ENCODE measurements at regions of chr3 and their contacts with region 1.

Region 1: DNA sequence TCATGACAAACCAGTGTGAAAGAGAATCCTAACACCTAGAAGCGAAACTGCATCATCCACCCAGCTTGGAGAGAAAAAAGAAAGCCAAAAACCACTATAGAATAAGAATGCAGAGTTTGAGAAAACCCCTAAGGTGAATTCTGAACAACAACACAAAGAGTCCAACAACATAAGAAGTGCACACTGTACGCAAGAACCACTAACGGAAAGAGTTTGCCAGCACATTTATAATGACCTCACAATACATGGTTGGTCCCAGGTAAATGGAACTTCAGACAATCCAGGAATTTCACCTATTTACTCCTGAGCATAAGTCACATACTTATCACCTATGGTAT is 128.3 kb upstream of the BHLHE40 start:
- DNase-seq: peak; percentile 56
- ATAC-seq: peak; percentile 72
- H3K4me3 Mint-ChIP-seq: peak overlapping the region; percentile 39
- H3K27ac Mint-ChIP-seq: peak overlapping the region; percentile 98
- H3K4me1 Mint-ChIP-seq: peaks cover 84% of the 10 kb centered on the region
- H3K27me3 Mint-ChIP-seq: no peaks in the 10 kb centered on the region

Region 2: GRCh38 chr3:4722103-4722502 is 128.8 kb before region 1 on chr3:
- CTCF ChIA-PET with region 1: interaction called, 3 read pairs
- POLR2A ChIA-PET with region 1: no interaction called
- intact Hi-C with region 1: loop called in 1 of 2 experiments (anchors 5 kb)
- DNase-seq: peak; percentile 58
- ATAC-seq: peak; percentile 93
- H3K4me3 Mint-ChIP-seq: no peak overlapping the region
- H3K27ac Mint-ChIP-seq: peak overlapping the region; percentile 51
- H3K4me1 Mint-ChIP-seq: peaks cover 32% of the 10 kb centered on the region
- H3K27me3 Mint-ChIP-seq: no peaks in the 10 kb centered on the region

Region 3: DNA sequence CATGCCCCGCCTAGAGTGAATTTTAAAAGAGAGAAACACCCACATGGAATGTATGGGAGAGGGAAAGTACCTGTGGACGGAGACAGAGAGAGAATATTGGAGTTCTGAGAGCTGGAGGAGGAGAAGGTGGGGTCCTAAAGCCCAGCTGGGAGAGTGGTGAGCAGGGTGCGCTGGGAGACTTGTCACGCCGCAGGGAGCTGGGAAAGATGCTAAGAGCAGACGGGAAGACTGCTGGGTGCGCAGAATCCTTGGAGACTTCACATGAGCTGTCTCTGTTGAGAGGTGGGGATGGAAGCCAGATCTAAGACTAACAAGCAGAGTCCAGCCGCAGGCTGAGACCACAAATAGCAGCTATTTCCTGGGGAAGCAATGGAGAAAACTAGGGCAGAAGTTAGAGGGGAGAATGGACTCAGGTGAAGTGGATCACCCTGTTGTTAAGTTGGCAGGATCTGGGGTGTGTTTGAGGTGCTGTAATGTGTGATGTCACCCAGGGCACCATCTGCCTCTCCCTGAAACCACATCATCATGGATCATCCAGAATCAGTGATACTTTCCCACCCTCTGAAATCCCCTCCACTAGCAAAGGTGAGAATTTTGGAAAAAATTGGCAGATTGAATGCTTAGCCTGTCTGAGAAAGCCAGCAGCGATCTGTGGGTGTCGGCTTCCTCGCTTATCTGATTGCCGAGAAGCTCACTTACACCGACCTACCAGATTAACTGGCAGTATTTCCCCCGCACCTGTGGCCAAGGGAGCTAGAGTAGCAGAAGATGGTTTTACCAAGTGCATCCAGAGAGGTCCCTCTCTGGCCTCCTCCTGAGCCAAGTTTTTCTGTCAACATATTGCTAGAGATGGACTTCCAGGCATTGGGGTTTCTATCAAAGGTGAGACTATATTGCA is 46.5 kb before region 1 on chr3:
- CTCF ChIA-PET with region 1: interaction called, 4 read pairs
- POLR2A ChIA-PET with region 1: interaction called, 14 read pairs
- intact Hi-C with region 1: loop called (anchors 1 to 2 kb)
- DNase-seq: peak; percentile 48
- ATAC-seq: no peak
- H3K4me3 Mint-ChIP-seq: peak overlapping the region; percentile 4
- H3K27ac Mint-ChIP-seq: peak overlapping the region; percentile 73
- H3K4me1 Mint-ChIP-seq: peaks cover 39% of the 10 kb centered on the region
- H3K27me3 Mint-ChIP-seq: no peaks in the 10 kb centered on the region

Region 4: DNA sequence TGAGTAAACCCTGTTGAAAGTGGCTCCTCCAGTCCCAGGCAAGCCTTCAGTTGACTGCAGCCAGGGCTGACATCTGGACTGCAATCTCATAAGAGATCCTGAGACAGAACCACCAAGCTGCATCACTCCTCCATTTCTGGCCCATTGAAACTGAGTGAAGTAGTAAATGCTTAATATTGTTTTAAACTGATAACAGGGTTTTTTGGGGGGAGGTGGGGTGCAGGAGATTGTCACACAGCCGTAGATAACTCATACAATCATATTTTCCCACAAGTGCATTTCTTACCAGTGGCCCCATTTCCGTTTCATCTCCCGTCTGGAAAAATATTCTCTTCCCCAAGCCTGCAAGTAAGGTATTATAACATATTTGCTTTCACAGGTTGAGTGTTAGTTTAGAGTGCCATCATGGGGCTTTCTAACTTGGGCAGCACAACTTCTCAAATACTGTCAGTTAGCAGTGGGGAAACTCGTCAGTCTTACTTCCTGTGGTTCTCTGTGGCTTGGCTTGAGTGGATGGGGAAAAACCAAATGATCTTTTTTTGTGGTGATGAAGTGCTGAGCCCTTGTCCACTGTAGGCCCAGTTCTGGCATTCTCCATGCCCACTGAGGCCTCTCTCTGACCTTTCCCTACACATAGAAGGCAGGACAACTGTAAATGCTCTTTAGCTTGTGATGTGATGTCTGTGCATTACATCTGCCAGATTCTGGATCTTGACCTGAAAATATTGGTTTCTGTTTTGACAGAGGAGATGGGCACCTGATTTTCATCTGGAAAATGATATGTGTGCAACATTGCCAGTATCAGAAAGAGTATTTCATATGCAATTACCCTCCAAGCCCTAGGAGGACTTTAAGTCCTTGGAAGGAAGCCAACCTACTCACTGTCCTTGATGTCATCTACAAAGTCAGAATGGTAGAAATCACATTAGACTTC is 38.3 kb after region 1 on chr3:
- CTCF ChIA-PET with region 1: no interaction called
- POLR2A ChIA-PET with region 1: no interaction called
- intact Hi-C with region 1: loop called (anchors 1 kb)
- DNase-seq: peak; percentile 50
- ATAC-seq: peak; percentile 90
- H3K4me3 Mint-ChIP-seq: peak overlapping the region; percentile 5
- H3K27ac Mint-ChIP-seq: peak overlapping the region; percentile 83
- H3K4me1 Mint-ChIP-seq: peaks cover 37% of the 10 kb centered on the region
- H3K27me3 Mint-ChIP-seq: peaks cover 2% of the 10 kb centered on the region

Region 5: DNA sequence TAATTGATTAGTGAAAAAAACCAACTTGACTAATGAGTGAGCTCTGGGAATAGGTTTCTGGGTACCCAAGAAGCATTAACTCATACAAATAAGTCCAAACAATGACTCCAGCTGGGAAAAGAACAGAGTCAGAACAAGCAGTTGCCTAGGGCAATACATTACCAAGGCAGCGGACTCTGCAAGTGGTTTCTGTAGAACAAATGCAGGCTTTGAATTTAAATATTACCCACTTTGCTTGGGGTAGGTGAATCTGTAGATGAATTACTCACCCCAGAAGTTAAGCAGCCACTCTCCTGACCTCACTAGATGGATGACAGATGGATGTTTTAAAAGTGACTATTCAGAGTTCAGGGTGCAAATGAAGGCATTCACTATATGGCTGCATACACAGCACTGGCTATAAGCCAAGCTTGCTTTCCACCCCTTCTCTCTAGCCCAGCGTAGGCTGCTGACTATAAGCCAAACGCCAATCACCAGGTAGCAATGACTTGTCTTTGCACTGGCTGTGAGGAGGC is 55.3 kb after region 1 on chr3:
- CTCF ChIA-PET with region 1: no interaction called
- POLR2A ChIA-PET with region 1: interaction called, 6 read pairs
- intact Hi-C with region 1: loop called (anchors 1 kb)
- DNase-seq: peak; percentile 54
- ATAC-seq: peak; percentile 75
- H3K4me3 Mint-ChIP-seq: no peak overlapping the region
- H3K27ac Mint-ChIP-seq: peak overlapping the region; percentile 53
- H3K4me1 Mint-ChIP-seq: peaks cover 75% of the 10 kb centered on the region
- H3K27me3 Mint-ChIP-seq: no peaks in the 10 kb centered on the region

Region 6: GRCh38 chr3:5194341-5195159 is 343.7 kb after region 1 on chr3:
- CTCF ChIA-PET with region 1: no interaction called
- POLR2A ChIA-PET with region 1: interaction called, 3 read pairs
- intact Hi-C with region 1: loop called (anchors 2 to 5 kb)
- DNase-seq: peak; percentile 62
- ATAC-seq: peak; percentile 34
- H3K4me3 Mint-ChIP-seq: peak overlapping the region; percentile 68
- H3K27ac Mint-ChIP-seq: peak overlapping the region; percentile 98
- H3K4me1 Mint-ChIP-seq: peaks cover 86% of the 10 kb centered on the region
- H3K27me3 Mint-ChIP-seq: no peaks in the 10 kb centered on the region

Measured in activated CD4-positive, alpha-beta T cell treated with anti-CD3 and anti-CD28 coated beads for 36 hours (primary cell).